OCI-LY7 (cell line): ENCODE measurements at regions of chr1 and their contacts with region 1.

Region 1: GRCh38 chr1:160951443-160952128 is 3.0 kb downstream of the ITLN2 start:
- DNase-seq: peak; percentile 80
- H3K4me3 ChIP-seq: no peak overlapping the region
- H3K27ac ChIP-seq: no peak overlapping the region
- H3K4me1 ChIP-seq: no peaks in the 10 kb centered on the region
- CTCF ChIP-seq: peak; percentile 93

Region 2: GRCh38 chr1:160618763-160619274 is 332.8 kb before region 1 on chr1:
- CTCF ChIA-PET with region 1: no interaction called
- POLR2A ChIA-PET with region 1: no interaction called
- intact Hi-C with region 1: loop called (anchors 10 kb)
- DNase-seq: peak; percentile 59
- H3K4me3 ChIP-seq: no peak overlapping the region
- H3K27ac ChIP-seq: no peak overlapping the region
- H3K4me1 ChIP-seq: peaks cover 72% of the 10 kb centered on the region
- CTCF ChIP-seq: peak; percentile 90

Region 3: DNA sequence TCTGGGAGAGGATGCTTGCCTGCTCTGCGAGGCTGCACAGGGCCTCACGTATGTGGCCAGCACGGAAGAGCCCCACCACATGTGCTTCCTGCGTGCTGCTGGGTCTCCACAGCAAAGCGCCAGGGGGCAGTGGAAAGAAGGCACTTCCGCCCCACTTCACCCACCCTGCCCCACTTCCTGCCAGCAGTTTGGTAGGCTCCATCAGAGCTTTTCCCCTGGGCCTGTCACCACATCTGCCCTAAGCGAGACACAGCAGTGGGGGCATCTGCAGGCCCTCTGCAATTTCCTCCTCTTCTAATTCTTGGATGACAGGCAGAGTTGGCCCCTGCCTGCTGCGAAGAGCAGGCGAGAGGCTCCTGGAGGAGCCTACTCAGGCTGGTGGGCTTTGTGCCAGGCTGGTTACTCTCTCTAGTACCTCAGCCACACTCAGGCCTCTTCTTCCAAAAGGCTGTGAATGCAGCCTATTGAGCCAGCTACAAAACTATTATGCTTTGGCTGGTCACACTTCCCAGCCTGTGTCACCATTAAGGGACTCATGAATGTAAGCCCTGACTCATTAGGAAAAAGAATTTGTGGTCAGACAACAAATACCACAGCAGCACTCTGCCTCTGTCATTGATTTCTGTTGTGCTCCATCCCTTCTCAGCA is 113.9 kb before region 1 on chr1:
- CTCF ChIA-PET with region 1: interaction called, 52 read pairs
- POLR2A ChIA-PET with region 1: interaction called, 7 read pairs
- intact Hi-C with region 1: loop called (anchors 1 kb)
- DNase-seq: peak; percentile 97
- H3K4me3 ChIP-seq: peak overlapping the region; percentile 10
- H3K27ac ChIP-seq: peak overlapping the region; percentile 63
- H3K4me1 ChIP-seq: peaks cover 39% of the 10 kb centered on the region
- CTCF ChIP-seq: peak; percentile 69

Region 4: GRCh38 chr1:160901768-160902167 is 49.8 kb before region 1 on chr1:
- CTCF ChIA-PET with region 1: no interaction called
- POLR2A ChIA-PET with region 1: no interaction called
- intact Hi-C with region 1: no loop called
- DNase-seq: no peak
- H3K4me3 ChIP-seq: no peak overlapping the region
- H3K27ac ChIP-seq: no peak overlapping the region
- H3K4me1 ChIP-seq: no peaks in the 10 kb centered on the region
- CTCF ChIP-seq: no peak